ENCODE measurements at regions of chr2 and their contacts with region 1.

Region 1: GRCh38 chr2:213119061-213119856 is 32.2 kb downstream of the IKZF2 start:
- DNase-seq: peak; percentile 27
- H3K4me3 Mint-ChIP-seq: no peak overlapping the region
- H3K27ac Mint-ChIP-seq: peak overlapping the region; percentile 67
- H3K4me1 Mint-ChIP-seq: peaks cover 14% of the 10 kb centered on the region
- H3K27me3 Mint-ChIP-seq: no peaks in the 10 kb centered on the region

Region 2: DNA sequence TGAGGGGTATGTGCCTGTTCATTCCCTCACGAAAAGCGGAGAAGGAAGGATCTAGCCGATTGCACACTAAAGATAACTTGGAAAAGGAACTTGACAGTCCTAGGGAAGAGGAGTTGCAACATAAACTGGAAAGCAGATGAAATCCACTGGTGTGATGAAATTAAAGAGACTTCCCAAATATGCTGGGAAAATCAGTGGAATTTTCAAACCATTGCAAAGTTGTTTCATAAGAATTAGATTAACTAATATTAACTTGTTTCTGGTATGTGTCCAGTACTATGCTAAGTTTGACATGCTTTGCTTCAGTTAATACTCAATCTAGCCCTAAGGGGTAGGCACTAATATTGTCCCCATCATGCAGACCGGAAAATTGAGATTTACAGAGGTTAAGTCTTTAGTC is 190.6 kb before region 1 on chr2:
- CTCF ChIA-PET with region 1: no interaction called
- POLR2A ChIA-PET with region 1: no interaction called
- intact Hi-C with region 1: loop called (anchors 1 kb)
- DNase-seq: no peak
- H3K4me3 Mint-ChIP-seq: no peak overlapping the region
- H3K27ac Mint-ChIP-seq: no peak overlapping the region
- H3K4me1 Mint-ChIP-seq: peaks cover 6% of the 10 kb centered on the region
- H3K27me3 Mint-ChIP-seq: no peaks in the 10 kb centered on the region

Region 3: DNA sequence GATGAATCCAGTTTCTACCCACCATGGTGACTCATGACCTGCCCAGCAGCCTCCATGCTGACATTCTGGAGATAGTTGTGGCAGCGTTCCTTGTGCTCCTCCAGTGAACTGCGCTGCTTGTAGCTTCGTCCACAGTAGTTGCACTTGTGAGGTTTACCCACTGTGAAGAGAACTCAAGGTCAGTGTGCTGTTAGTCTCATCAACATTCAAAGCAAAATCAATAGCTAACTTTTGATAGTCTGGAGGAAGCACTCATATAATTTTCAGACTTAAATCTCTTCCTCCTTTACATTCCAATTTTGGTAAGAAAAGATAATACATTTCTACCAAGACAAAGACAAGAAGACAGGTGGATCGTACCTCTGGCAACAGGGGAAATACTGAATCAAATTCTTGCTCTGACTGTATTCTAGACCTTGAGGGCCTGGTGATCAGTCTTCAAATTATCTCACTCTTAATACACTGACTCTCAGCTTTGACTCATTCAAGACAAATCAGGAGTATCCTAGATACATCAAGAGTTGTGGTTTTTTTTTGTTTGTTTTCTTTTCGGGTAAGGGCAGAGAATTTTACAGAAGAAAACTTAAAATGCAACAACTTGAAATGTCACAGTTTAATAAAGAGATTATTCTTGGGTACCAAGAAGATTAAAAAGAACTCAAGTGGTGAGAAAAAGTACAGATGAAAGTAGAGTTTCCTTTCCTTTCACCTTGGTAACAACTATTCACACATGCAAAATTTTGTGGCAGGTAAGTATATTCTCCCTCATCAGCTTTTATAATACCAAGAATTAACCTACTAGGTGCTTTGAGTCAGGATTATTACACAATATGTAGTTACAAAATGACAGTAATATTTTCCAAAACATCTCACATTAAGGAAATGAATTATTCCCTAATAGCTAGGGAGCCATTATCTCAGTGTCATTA is 97.0 kb before region 1 on chr2:
- CTCF ChIA-PET with region 1: no interaction called
- POLR2A ChIA-PET with region 1: interaction called, 5 read pairs
- intact Hi-C with region 1: loop called (anchors 1 kb)
- DNase-seq: peak; percentile 24
- H3K4me3 Mint-ChIP-seq: no peak overlapping the region
- H3K27ac Mint-ChIP-seq: peak overlapping the region; percentile 0
- H3K4me1 Mint-ChIP-seq: peaks cover 16% of the 10 kb centered on the region
- H3K27me3 Mint-ChIP-seq: peaks cover 7% of the 10 kb centered on the region

Measured in activated CD4-positive, alpha-beta memory T cell treated with anti-CD3 and anti-CD28 coated beads for 36 hours (primary cell).